HepG2 (cell line): ENCODE measurements at regions of chr10 and their contacts with region 1.

Region 1: DNA sequence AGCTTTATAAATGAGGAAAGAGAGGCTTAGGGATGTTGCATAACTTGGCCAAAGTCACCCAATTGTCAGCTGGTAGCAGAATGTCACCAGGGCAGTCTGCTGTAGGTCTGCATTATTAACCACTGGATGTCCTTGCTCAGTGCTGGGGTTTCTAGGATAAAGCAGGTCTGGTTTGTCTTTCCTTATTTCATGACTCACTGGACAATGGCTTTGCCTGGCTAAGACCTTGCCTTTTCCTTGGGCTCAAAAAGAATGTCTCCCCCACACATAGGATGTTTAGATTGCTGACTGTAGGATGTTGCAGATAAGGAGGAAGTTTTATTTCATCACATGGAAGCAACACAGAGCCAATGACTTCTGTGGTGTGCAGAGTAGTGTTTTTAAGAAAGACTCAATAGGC is 29.4 kb downstream of the WDFY4 start:
- DNase-seq: no peak
- ATAC-seq: no peak
- H3K4me3 ChIP-seq: no peak overlapping the region
- H3K27ac ChIP-seq: no peak overlapping the region
- H3K4me1 ChIP-seq: no peaks in the 10 kb centered on the region
- H3K27me3 ChIP-seq: peaks cover 0 to 4% of the 10 kb centered on the region in 2 experiments; a peak in 2 of 5 replicates
- CTCF ChIP-seq: no peak
- EP300 ChIP-seq: no peak
- POLR2A ChIP-seq: no peak
- RAD21 ChIP-seq: no peak

Region 2: GRCh38 chr10:48658243-48658974 is 55.7 kb before region 1 on chr10:
- CTCF ChIA-PET with region 1: no interaction called
- POLR2A ChIA-PET with region 1: no interaction called
- in situ Hi-C with region 1: no loop called
- intact Hi-C with region 1: no loop called
- DNase-seq: peak; percentile 56
- ATAC-seq: peak; percentile 46
- H3K4me3 ChIP-seq: no peak overlapping the region
- H3K27ac ChIP-seq: no peak overlapping the region
- H3K4me1 ChIP-seq: peaks cover 16% of the 10 kb centered on the region
- H3K27me3 ChIP-seq: peaks cover 4 to 19% of the 10 kb centered on the region in 2 experiments; a peak in 4 of 5 replicates
- CTCF ChIP-seq: peak; percentile 90
- EP300 ChIP-seq: no peak
- POLR2A ChIP-seq: no peak
- RAD21 ChIP-seq: peak; percentile 63; the same call in 1 of the 2 replicates

Region 3: GRCh38 chr10:49225218-49225876 is 511.3 kb after region 1 on chr10:
- CTCF ChIA-PET with region 1: no interaction called
- POLR2A ChIA-PET with region 1: no interaction called
- in situ Hi-C with region 1: no loop called
- intact Hi-C with region 1: no loop called
- DNase-seq: no peak
- ATAC-seq: no peak
- H3K4me3 ChIP-seq: no peak overlapping the region
- H3K27ac ChIP-seq: no peak overlapping the region
- H3K4me1 ChIP-seq: no peaks in the 10 kb centered on the region
- H3K27me3 ChIP-seq: no peaks in the 10 kb centered on the region; a peak in 2 of 5 replicates
- CTCF ChIP-seq: no peak
- EP300 ChIP-seq: no peak
- POLR2A ChIP-seq: no peak
- RAD21 ChIP-seq: no peak

Region 4: DNA sequence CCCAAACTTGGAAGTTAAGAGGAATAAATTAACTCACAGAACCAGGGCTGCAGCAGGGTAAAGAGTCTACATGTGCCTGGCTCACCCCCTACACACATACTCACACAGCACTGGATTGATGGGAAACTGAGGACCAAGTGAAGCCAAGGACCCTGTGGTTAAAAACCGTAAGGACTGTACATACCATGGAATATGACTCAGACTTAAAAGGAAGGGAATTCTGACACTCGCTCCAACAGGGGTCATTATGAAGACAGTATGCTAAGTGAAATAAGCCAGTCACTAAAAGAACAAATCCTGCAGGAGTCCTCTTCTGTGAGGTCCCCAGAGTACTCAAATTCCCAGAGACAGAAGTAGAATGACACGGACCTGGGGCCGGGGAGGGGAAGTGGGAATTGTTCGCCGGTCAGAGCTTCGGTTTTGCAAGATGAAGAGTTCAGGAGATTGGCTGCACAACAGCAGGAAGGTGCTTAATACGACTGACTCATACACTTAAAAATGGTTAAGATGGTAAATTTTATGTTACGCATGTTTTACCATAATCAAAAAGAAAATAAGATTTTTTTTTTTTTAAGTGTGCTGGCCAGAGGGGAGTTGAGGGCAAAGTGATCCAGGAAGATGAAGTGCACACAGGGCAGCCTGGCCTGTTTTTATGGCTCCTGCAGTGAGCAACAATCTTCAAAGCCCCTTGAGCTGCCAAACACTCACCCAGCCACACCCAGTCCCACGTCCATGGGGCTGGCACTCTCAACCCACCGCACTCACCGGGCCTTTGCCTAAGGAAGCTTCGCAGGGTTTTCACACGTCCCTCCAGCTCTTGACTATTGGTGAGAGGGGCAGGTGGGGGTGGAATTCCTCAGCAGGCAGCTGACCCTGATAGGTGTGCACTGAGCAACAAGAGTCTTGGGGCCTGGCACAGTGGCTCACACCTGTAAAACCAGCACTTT is 655.4 kb after region 1 on chr10:
- CTCF ChIA-PET with region 1: no interaction called
- POLR2A ChIA-PET with region 1: no interaction called
- in situ Hi-C with region 1: no loop called
- intact Hi-C with region 1: loop called (anchors 5 kb)
- DNase-seq: no peak
- ATAC-seq: no peak
- H3K4me3 ChIP-seq: no peak overlapping the region
- H3K27ac ChIP-seq: no peak overlapping the region
- H3K4me1 ChIP-seq: no peaks in the 10 kb centered on the region
- H3K27me3 ChIP-seq: 0 out of 5 replicates have a peak, but pooled peaks cover 0 to 3% of the 10 kb centered on the region in 2 experiments
- CTCF ChIP-seq: no peak
- EP300 ChIP-seq: no peak
- POLR2A ChIP-seq: no peak
- RAD21 ChIP-seq: no peak